HAP-1 (cell line): ENCODE measurements at regions of chr3 and their contacts with region 1.

Region 1: DNA sequence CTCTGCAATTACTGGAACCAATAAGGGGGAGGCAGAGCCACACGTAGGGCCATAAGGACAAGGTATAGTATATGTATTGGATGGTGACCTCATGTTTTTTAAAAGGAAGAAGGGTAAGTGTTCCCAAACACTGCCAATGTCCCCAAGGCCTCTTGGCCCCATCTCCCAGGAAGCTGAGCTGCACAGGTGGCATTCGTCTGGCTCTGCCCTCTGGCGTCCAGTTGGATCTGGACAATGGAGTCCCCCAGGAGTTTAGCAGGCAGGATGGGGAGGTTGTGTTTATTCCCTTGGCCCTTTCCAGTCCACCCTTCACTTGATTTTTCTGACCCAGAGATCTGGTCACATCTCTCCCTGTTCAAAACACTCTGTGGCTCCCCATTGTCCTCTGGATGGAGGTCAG is 22.5 kb downstream of the C3orf18 start:
- DNase-seq: no peak
- H3K4me3 ChIP-seq: no peak overlapping the region
- H3K4me1 ChIP-seq: peaks cover 3% of the 10 kb centered on the region; the same call in 1 of the 2 replicates
- H3K27me3 ChIP-seq: no peaks in the 10 kb centered on the region

Region 2: DNA sequence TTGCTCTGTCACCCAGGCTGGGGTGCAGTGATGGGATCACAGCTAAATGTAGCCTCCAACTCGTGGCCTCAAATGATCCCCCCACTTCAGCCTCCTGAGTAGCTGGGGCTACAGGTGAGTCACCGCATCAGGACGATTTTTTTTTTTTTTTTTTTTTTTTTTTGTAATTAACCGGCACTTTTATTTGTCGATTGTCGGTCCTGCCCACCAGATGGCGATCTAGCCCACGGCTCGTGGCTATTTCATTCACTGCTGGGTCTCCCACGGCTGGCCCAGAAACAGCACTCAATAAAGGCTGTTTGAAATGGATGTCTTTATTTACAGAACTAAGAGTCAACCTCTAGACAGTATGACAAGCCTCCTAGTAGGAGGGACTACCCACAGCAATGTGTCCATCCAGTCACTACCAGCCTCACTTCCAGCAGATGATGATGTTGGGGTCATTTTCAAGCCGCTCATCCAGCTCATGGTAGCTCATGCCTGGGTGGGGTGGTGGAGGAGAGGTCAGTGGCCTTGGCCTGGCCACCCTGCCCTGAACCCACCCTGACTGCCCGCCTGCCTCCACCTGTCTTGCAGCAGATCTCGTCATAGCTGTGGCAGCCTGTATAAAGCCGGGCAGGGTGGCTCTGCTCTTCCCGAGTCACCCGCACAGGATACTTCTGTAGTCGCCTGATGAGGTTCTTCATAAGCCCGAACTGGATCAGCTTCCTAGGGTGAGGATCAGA is 197.6 kb before region 1 on chr3:
- in situ Hi-C with region 1: loop called (anchors 5 kb)
- DNase-seq: peak; percentile 57 to 83
- H3K4me3 ChIP-seq: no peak overlapping the region
- H3K4me1 ChIP-seq: peaks cover 9% of the 10 kb centered on the region
- H3K27me3 ChIP-seq: no peaks in the 10 kb centered on the region

Region 3: DNA sequence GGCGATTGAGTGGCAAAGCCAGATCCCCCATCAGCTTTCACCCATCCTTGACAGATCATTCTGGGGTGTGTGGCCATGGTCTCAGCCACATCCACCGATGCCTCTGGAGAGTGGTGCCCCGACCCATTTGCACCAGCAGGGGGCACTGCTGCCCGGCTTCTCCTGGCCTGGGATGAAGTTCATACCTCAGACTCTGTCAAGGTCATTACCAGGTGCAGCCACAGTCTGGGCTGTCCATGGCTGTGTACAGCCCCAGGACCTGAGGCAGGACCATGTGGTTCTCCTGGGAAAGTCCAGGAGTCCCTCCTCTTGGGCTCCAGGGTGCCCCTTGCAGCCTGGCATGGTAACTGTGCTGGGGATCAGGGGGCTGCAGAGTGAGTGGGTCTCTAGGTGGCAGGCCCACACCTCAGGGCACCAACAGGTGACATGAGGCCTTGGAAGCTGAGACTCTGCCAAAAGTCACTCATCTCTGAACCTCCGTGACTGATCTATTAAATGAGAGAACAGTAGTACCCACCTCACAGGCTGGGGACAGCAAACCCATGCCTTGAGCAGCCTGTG is 108.8 kb before region 1 on chr3:
- in situ Hi-C with region 1: loop called (anchors 5 kb)
- DNase-seq: peak; percentile 55 to 87
- H3K4me3 ChIP-seq: no peak overlapping the region
- H3K4me1 ChIP-seq: peaks cover 1% of the 10 kb centered on the region
- H3K27me3 ChIP-seq: no peaks in the 10 kb centered on the region

Region 4: GRCh38 chr3:50687127-50687751 is 142.2 kb after region 1 on chr3:
- in situ Hi-C with region 1: no loop called
- DNase-seq: no peak
- H3K4me3 ChIP-seq: no peak overlapping the region
- H3K4me1 ChIP-seq: no peaks in the 10 kb centered on the region
- H3K27me3 ChIP-seq: no peaks in the 10 kb centered on the region

Region 5: GRCh38 chr3:50807266-50807665 is 262.3 kb after region 1 on chr3:
- in situ Hi-C with region 1: no loop called
- DNase-seq: no peak
- H3K4me3 ChIP-seq: no peak overlapping the region
- H3K4me1 ChIP-seq: peaks cover 2% of the 10 kb centered on the region; the same call in 1 of the 2 replicates
- H3K27me3 ChIP-seq: no peaks in the 10 kb centered on the region